AG04449 (cell line): ENCODE measurements at regions of chr3 and their contacts with region 1.

Region 1: GRCh38 chr3:58491506-58492402 is at the start of gene KCTD6:
- DNase-seq: peak; percentile 36
- H3K4me3 ChIP-seq: peak within 1 kb of the TSS; percentile 72
- CTCF ChIP-seq: peak; percentile 77

Region 2: GRCh38 chr3:58463181-58463941 is 28.4 kb before region 1 on chr3:
- CTCF ChIA-PET with region 1: interaction called, 13 read pairs
- POLR2A ChIA-PET with region 1: interaction called, 4 read pairs
- DNase-seq: peak; percentile 36
- H3K4me3 ChIP-seq: no peak overlapping the region
- CTCF ChIP-seq: peak; percentile 82

Region 3: DNA sequence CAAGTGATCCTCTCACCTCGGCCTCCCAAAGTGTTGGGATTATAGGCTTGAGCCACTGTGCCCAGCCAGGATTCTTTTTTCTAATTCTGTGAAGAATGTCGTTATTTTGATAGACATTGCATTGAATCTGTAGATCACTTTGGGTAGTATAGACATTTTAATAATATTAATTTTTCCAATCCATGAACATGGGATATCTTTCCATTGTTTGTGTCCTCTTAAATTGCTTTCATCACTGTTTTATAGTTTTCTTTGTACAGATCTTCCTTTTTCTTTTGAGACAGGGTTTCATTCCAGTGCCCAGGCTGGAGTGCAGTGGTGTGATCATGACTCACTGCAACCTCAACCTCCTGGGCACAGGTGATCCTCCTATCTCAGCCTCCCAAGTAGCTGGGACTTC is 11.4 kb before region 1 on chr3:
- CTCF ChIA-PET with region 1: interaction called, 37 read pairs
- POLR2A ChIA-PET with region 1: no interaction called
- DNase-seq: no peak
- H3K4me3 ChIP-seq: no peak overlapping the region
- CTCF ChIP-seq: no peak

Region 4: DNA sequence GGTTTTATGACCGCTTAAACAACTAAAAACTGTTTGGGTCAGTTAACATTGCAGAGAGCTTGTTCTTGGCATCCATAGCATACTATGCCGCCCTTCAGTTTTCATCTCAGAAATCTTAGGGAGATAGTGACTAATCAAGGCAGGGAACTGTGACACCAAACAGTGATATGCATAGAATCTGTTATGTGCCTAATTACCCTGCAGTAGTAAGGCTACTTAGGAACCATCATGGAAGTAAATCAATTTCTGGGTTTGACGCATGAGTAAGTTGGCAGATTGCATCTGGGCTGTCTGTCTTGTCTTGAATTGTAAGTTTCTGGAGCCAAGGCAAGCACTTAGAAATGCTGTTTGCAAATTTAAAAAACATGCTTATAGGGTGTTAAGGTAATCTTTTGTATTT is 22.7 kb after region 1 on chr3:
- CTCF ChIA-PET with region 1: interaction called, 12 read pairs
- POLR2A ChIA-PET with region 1: no interaction called
- DNase-seq: no peak
- H3K4me3 ChIP-seq: no peak overlapping the region
- CTCF ChIP-seq: no peak

Region 5: DNA sequence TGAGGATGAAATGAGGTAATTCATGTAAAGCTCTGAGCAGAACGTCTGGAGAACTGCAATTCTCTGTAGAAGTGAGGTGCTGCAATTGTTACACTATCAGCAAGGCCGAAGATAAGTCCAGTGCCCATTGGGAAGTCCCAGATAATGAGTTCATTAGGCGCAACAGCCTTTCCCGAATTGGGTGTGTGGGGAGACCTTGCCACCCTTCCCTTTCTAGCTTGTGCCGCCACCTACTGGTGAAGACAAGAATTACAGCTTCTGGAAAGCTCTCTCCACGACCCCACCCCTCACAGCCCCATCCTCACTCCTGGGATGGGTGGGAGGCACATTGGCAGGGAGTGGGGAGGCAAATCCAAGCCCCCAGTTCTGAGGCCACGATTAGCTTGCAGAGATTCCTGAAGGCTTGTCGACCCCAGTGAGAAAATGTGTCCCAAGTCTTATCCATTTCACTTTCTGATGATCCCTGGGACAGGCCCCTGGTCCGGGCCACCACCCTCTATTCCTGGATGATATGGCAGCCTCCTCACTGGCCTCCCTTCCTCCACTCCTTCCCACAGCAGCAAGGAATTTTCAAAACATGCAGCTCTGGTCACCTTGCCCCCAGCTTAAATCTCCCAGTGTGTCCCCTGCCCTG is 138.4 kb after region 1 on chr3:
- CTCF ChIA-PET with region 1: interaction called, 29 read pairs
- POLR2A ChIA-PET with region 1: no interaction called
- DNase-seq: no peak
- H3K4me3 ChIP-seq: no peak overlapping the region
- CTCF ChIP-seq: peak; percentile 79